B cell (primary cell): ENCODE measurements at regions of chr11 and their contacts with region 1.

Region 1: GRCh38 chr11:61891331-61892084 is at the start of gene FADS3:
- DNase-seq: peak; percentile 96
- ATAC-seq: peak; percentile 61
- H3K4me3 ChIP-seq: peak within 1 kb of the TSS; percentile 13 to 84 (median 72)
- H3K4me3 Mint-ChIP-seq: peak within 1 kb of the TSS; percentile 94
- H3K27ac ChIP-seq: peak within 1 kb of the TSS; percentile 79 to 91
- H3K27ac Mint-ChIP-seq: peak within 1 kb of the TSS; percentile 96
- H3K4me1 ChIP-seq: peaks cover 18 to 29% of the 10 kb centered on the region in 2 donors
- H3K4me1 Mint-ChIP-seq: peaks cover 38% of the 10 kb centered on the region
- H3K27me3 ChIP-seq: no peaks in the 10 kb centered on the region
- H3K27me3 Mint-ChIP-seq: no peaks in the 10 kb centered on the region
- CTCF ChIP-seq: peak; percentile 47
- total RNA-seq, gene FADS3: 224 and 225 TPM in 2 replicates

Region 2: GRCh38 chr11:61679893-61680621 is 211.5 kb before region 1 on chr11 and contains the start of gene DAGLA:
- CTCF ChIA-PET with region 1: no interaction called
- POLR2A ChIA-PET with region 1: no interaction called
- intact Hi-C with region 1: no loop called
- DNase-seq: peak; percentile 73
- ATAC-seq: peak; percentile 81
- H3K4me3 ChIP-seq: no peak within 1 kb of the TSS
- H3K4me3 Mint-ChIP-seq: peak within 1 kb of the TSS; percentile 55
- H3K27ac ChIP-seq: no peak within 1 kb of the TSS
- H3K27ac Mint-ChIP-seq: no peak within 1 kb of the TSS
- H3K4me1 ChIP-seq: peaks cover 3 to 12% of the 10 kb centered on the region in 2 donors
- H3K4me1 Mint-ChIP-seq: peaks cover 7% of the 10 kb centered on the region
- H3K27me3 ChIP-seq: peaks cover 0 to 32% (median 10%) of the 10 kb centered on the region in 4 experiments
- H3K27me3 Mint-ChIP-seq: peaks cover 42% of the 10 kb centered on the region
- CTCF ChIP-seq: peak; percentile 58
- total RNA-seq, gene DAGLA: 0.07 TPM in 1 of 2 replicates, not detected in the other

Region 3: DNA sequence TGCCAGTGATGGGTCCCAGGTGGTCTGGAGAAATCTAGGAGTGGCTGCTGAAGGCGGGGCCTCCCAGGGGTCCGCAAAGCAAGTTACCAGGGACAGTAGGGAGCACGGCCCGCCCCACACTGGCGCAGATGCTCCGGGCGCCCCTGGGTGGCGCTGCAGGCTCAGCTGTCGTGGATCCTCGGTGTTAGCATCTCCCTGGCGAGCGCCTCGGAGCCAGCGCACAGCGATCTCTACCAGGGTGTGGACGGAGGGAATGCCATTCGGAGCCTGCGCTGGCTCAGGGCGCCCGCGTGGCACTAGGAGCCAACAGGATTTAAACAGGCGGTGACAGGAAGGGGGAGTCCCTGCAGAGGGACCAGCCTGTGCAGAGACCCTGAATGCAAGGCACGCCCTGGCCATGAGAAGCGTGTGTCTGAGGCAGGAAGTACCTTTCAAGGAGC is 20.3 kb before region 1 on chr11:
- CTCF ChIA-PET with region 1: interaction called, 141 read pairs
- POLR2A ChIA-PET with region 1: no interaction called
- intact Hi-C with region 1: loop called (anchors 1 kb)
- DNase-seq: peak; percentile 88
- ATAC-seq: peak; percentile 97
- H3K4me3 ChIP-seq: peak overlapping the region in 4 of 5 experiments; percentile 13 to 38 (median 26)
- H3K4me3 Mint-ChIP-seq: peak overlapping the region; percentile 84
- H3K27ac ChIP-seq: no peak overlapping the region
- H3K27ac Mint-ChIP-seq: peak overlapping the region; percentile 83
- H3K4me1 ChIP-seq: peaks cover 9 to 12% of the 10 kb centered on the region in 2 donors
- H3K4me1 Mint-ChIP-seq: peaks cover 8% of the 10 kb centered on the region
- H3K27me3 ChIP-seq: peaks cover 0 to 4% (median 0%) of the 10 kb centered on the region in 4 experiments
- H3K27me3 Mint-ChIP-seq: no peaks in the 10 kb centered on the region
- CTCF ChIP-seq: peak; percentile 98

Region 4: DNA sequence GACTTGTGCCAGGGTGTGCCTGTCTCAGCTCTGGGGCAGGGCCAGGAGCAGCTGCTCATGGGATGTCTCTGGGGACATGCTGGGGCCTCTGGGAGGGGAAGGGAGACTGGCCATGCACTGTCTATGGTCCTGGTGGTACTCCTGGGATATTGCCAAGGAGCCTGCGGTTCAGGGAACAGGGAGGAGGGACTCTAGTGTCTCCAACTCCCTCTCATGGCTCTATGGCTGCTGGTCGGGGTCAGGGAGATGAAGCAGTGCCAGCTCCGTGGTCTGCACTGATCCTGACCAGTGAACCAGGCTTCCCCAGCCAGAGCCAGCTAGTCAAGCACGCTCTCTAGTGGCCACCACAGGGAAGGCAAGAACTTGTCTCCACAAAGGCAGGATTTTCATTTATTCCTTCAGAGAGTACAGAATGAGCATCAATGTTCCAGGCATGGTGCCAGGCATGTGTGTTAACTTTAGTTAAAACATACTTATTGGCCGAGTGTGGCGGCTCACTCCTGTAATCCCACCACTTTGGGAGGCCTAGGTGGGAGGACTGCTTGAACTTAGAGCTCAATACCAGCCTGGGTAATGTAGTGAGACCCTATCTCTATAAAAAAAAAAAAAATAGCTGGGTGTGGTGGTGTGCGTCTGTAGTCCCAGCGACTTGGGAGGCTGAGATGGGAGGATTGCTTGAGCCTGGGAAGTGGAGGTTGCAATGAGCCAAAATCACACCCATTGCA is 56.1 kb after region 1 on chr11:
- CTCF ChIA-PET with region 1: interaction called, 172 read pairs
- POLR2A ChIA-PET with region 1: interaction called, 6 read pairs
- intact Hi-C with region 1: no loop called
- DNase-seq: peak; percentile 82
- ATAC-seq: peak; percentile 90
- H3K4me3 ChIP-seq: no peak overlapping the region
- H3K4me3 Mint-ChIP-seq: no peak overlapping the region
- H3K27ac ChIP-seq: no peak overlapping the region
- H3K27ac Mint-ChIP-seq: peak overlapping the region; percentile 3
- H3K4me1 ChIP-seq: peaks cover 7 to 9% of the 10 kb centered on the region in 2 donors
- H3K4me1 Mint-ChIP-seq: peaks cover 8% of the 10 kb centered on the region
- H3K27me3 ChIP-seq: no peaks in the 10 kb centered on the region
- H3K27me3 Mint-ChIP-seq: peaks cover 4% of the 10 kb centered on the region
- CTCF ChIP-seq: peak; percentile 90

Region 5: DNA sequence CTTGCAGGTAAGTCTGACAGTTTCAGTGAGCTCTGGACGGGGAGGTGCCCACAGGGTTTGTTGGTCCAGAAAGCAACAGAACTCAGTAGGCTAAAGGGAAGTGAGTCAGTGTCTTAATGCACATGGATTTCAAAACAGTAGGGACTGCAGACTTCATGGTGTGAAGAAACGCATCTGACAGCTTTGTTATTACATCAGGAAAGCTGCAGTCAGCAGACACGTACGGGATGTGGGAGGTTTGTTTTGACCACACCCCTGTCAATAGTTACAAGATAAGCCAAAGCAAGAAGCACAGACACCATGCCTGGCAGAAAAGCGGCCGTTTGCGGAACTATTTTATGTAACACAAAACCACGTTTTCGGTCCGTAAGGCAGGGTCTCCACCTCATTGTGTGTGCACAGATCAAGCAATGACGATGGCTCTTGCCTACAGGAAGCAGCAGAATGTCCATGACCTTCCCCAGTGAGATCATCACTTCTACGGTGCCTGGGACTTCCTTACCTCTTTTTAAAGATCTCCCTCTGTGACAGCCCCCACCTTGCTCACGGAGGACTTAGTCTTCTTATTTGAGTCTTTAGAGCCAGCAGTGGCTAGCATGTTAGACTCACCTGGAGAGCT is 134.1 kb after region 1 on chr11:
- CTCF ChIA-PET with region 1: no interaction called
- POLR2A ChIA-PET with region 1: no interaction called
- intact Hi-C with region 1: loop called (anchors 5 kb)
- DNase-seq: peak; percentile 93
- ATAC-seq: peak; percentile 83
- H3K4me3 ChIP-seq: peak overlapping the region in 3 of 5 experiments; percentile 6 to 30 (median 12)
- H3K4me3 Mint-ChIP-seq: peak overlapping the region; percentile 56
- H3K27ac ChIP-seq: peak overlapping the region; percentile 75 to 79
- H3K27ac Mint-ChIP-seq: peak overlapping the region; percentile 87
- H3K4me1 ChIP-seq: peaks cover 15 to 19% of the 10 kb centered on the region in 2 donors
- H3K4me1 Mint-ChIP-seq: peaks cover 23% of the 10 kb centered on the region
- H3K27me3 ChIP-seq: peaks cover 0 to 4% (median 0%) of the 10 kb centered on the region in 4 experiments
- H3K27me3 Mint-ChIP-seq: peaks cover 3% of the 10 kb centered on the region
- CTCF ChIP-seq: no peak

Region 6: GRCh38 chr11:62123669-62124185 is 232.2 kb after region 1 on chr11 and contains the start of gene INCENP:
- CTCF ChIA-PET with region 1: no interaction called
- POLR2A ChIA-PET with region 1: no interaction called
- intact Hi-C with region 1: loop called (anchors 5 kb)
- DNase-seq: peak; percentile 97
- ATAC-seq: peak; percentile 99
- H3K4me3 ChIP-seq: peak within 1 kb of the TSS; percentile 71 to 99 (median 93)
- H3K4me3 Mint-ChIP-seq: peak within 1 kb of the TSS; percentile 94
- H3K27ac ChIP-seq: peak within 1 kb of the TSS; percentile 52 to 67
- H3K27ac Mint-ChIP-seq: peak within 1 kb of the TSS; percentile 88
- H3K4me1 ChIP-seq: peaks cover 11 to 16% of the 10 kb centered on the region in 2 donors
- H3K4me1 Mint-ChIP-seq: peaks cover 30% of the 10 kb centered on the region
- H3K27me3 ChIP-seq: peaks cover 0 to 2% (median 0%) of the 10 kb centered on the region in 4 experiments
- H3K27me3 Mint-ChIP-seq: no peaks in the 10 kb centered on the region
- CTCF ChIP-seq: no peak
- total RNA-seq, gene INCENP: 34.0 and 37.8 TPM in 2 replicates